WTC11 (cell line): ENCODE measurements at regions of chr4 and their contacts with region 1.

Region 1: DNA sequence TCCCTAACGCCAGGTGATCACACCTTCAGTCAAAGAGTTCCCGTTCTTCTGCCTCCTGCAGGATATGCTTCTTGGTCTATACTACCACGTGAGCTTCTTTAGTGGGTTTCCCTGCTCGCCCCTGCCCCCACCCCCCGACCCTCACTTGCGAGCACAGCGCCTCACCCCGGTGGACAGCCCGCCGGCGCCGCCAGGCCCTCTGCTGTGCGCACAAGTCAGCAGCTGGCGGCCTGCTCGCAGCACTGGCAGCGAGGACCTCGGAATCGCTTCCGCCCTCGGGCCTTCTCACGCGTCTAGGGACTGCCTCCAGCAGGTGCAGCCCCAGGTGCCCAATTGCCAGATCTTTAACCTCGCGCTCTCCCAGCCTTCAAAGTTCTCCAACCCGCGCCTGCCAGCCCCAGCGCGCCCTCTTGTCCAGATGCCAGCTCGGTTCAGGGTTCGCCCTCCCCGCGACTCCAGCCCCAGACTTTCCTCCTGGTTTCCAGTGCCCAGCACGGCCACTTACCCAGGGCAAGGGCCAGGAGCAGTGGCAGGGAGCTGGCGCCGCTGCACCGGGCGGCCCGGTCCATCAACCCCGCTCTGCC is 474 bp downstream of the BTC start:
- DNase-seq: peak; percentile 79
- ATAC-seq: peak; percentile 87
- H3K4me3 Mint-ChIP-seq: peak overlapping the region; percentile 79
- H3K27ac Mint-ChIP-seq: no peak overlapping the region
- H3K4me1 Mint-ChIP-seq: peaks cover 20% of the 10 kb centered on the region
- H3K27me3 Mint-ChIP-seq: peaks cover 31% of the 10 kb centered on the region
- CTCF ChIP-seq: no peak

Region 2: GRCh38 chr4:74777531-74777930 is 16.3 kb before region 1 on chr4:
- CTCF ChIA-PET with region 1: interaction called, 13 read pairs
- POLR2A ChIA-PET with region 1: no interaction called
- DNase-seq: no peak
- ATAC-seq: no peak
- H3K4me3 Mint-ChIP-seq: no peak overlapping the region
- H3K27ac Mint-ChIP-seq: no peak overlapping the region
- H3K4me1 Mint-ChIP-seq: peaks cover 4% of the 10 kb centered on the region
- H3K27me3 Mint-ChIP-seq: no peaks in the 10 kb centered on the region
- CTCF ChIP-seq: no peak

Region 3: DNA sequence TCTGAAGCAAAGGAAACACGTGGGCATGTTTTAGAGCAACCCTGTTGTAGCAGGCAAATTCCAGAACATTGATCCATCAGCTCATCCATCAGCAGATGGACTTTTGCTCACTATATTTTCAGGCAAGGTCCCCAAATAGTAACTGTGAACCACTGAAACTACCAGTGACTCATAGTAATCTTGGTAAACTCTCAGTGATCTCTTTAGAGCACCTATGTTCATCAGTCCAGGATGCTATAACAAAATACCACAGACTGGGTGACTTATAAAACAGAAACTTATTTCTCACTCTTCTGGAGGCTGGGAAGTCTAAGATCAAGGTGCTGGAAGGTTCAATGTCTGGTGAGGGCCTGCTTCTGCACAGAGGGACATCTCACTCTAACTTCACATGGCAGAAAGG is 29.3 kb after region 1 on chr4:
- CTCF ChIA-PET with region 1: interaction called, 14 read pairs
- POLR2A ChIA-PET with region 1: no interaction called
- DNase-seq: no peak
- ATAC-seq: no peak
- H3K4me3 Mint-ChIP-seq: no peak overlapping the region
- H3K27ac Mint-ChIP-seq: no peak overlapping the region
- H3K4me1 Mint-ChIP-seq: peaks cover 4% of the 10 kb centered on the region
- H3K27me3 Mint-ChIP-seq: peaks cover 2% of the 10 kb centered on the region; the same call in 1 of the 2 replicates
- CTCF ChIP-seq: no peak